GM12878 (cell line): ENCODE measurements at regions of chr10 and their contacts with region 1.

Region 1: DNA sequence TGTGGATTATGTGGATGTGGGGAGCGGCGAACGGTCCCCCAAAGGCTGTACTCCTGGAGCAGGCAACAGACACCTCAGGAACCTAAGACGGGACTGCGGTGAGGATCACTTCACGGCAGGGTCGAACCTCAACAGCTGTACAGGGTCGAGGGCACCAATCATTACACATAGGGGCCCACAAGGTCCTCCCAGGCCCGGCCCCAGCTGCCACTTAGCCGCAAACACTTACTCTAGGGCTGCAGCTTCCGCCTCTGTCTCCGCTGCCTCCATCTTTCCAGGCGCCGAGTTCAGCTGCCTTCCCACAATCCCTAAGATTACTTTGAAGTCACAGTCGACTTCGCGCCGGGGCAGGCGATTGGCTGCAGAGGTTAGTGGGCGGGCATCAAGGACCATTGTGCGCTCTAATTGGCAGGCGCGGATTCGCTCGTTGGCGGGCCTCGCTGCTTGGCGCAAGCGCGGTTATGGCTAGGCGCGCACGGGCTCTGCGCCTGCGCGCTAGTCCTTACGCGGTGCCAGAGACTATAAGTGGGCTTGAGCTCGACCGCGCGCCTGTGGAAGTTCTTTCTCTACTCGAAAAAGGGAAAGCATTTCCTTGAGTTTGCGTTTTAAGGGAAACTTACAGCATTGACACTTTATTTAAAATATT is at the start of gene ZWINT:
- DNase-seq: peak; percentile 90
- ATAC-seq: peak; percentile 98
- H3K4me3 ChIP-seq: peak within 1 kb of the TSS; percentile 83
- H3K27ac ChIP-seq: peak within 1 kb of the TSS; percentile 79
- H3K4me1 ChIP-seq: no peaks in the 10 kb centered on the region; the same call in none of the 2 replicates
- H3K27me3 ChIP-seq: no peaks in the 10 kb centered on the region
- CTCF ChIP-seq: no peak
- EP300 ChIP-seq: no peak
- POLR2A ChIP-seq: peak; percentile 89
- RAD21 ChIP-seq: no peak
- polyA plus RNA-seq, gene ZWINT: 129 to 151 TPM

Region 2: DNA sequence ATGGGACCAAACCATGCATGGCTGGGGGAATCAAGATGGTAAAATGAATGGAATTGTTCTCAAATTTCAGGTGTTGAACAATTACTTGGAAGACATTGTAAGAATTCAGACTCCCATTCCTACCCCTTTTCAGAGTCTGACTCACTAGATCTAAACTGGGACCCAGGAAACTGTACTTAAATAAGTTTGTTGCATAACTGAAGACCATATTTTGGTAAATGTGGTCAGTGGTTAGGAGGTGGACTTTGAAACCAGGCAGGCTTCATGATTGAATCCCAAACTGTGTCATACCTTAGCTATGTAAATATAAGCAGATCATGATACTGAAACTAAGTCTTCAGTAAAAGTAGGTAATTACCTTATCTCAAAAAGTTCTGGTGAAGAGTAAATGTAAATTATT is 41.7 kb before region 1 on chr10:
- CTCF ChIA-PET with region 1: no interaction called
- POLR2A ChIA-PET with region 1: no interaction called
- RAD21 ChIA-PET with region 1: no interaction called
- SMC1A ChIA-PET with region 1: interaction called, 4 read pairs
- in situ Hi-C with region 1: no loop called
- intact Hi-C with region 1: loop called (anchors 1 kb)
- DNase-seq: peak; percentile 57
- ATAC-seq: peak; percentile 94
- H3K4me3 ChIP-seq: no peak overlapping the region
- H3K27ac ChIP-seq: no peak overlapping the region; the same call in 1 of the 2 replicates
- H3K4me1 ChIP-seq: no peaks in the 10 kb centered on the region
- H3K27me3 ChIP-seq: no peaks in the 10 kb centered on the region; a peak in 1 of 4 replicates
- CTCF ChIP-seq: no peak
- EP300 ChIP-seq: peak; percentile 58 to 75; a peak in 3 of 4 replicates
- POLR2A ChIP-seq: no peak
- RAD21 ChIP-seq: no peak